ENCODE measurements at regions of chr10 and their contacts with region 1.

Region 1: GRCh38 chr10:70540089-70540788 is 61.7 kb downstream of the PALD1 start:
- DNase-seq: peak in 1 of 2 donors; percentile 14
- H3K4me3 ChIP-seq: no peak overlapping the region
- H3K27ac ChIP-seq: no peak overlapping the region
- H3K4me1 ChIP-seq: no peaks in the 10 kb centered on the region
- H3K27me3 ChIP-seq: no peaks in the 10 kb centered on the region
- CTCF ChIP-seq: peak in 5 of 6 experiments; percentile 25 to 53 (median 33)
- POLR2A ChIP-seq: no peak

Region 2: DNA sequence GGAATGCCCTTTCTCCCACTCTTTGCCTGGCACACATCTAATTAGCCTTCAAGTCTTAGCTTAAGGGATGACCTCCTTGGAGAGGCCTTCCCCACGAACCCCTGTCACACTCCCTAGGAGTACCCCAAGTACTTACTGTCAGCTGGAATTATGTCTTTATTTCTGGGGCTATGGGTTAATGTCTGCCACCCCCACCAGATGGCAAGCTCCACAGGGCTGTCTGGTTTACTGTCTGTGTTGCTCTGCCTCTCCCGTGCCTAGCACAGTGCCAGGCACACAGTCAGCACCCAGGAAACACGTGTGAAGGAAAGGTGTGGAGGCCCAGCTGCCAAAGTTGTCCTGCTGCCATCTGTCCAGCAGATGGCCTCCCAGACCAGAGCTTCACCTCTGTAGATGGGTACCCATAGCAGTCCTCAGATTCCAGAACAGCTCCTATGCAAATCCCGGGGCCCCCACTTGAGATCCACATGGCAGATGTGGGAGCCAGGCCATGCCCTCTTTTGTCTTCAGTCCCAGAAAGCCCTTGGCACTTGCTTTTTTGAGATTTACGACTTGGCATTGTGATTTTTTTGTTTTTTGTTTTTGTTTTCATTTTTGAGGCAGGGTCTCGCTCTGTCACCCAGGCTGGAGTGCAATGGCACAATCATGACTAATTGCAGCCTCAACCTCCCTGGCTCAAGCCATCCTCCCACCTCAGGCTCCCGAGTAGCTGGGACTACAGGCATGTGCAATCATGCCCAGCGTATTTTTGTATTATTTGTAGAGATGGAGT is 78.8 kb before region 1 on chr10:
- intact Hi-C with region 1: loop called (anchors 5 kb)
- DNase-seq: peak; percentile 53 to 56
- H3K4me3 ChIP-seq: no peak overlapping the region
- H3K27ac ChIP-seq: no peak overlapping the region
- H3K4me1 ChIP-seq: peaks cover 11 to 20% of the 10 kb centered on the region in 2 donors
- H3K27me3 ChIP-seq: no peaks in the 10 kb centered on the region
- CTCF ChIP-seq: peak; percentile 47 to 88 (median 78)
- POLR2A ChIP-seq: no peak

Region 3: DNA sequence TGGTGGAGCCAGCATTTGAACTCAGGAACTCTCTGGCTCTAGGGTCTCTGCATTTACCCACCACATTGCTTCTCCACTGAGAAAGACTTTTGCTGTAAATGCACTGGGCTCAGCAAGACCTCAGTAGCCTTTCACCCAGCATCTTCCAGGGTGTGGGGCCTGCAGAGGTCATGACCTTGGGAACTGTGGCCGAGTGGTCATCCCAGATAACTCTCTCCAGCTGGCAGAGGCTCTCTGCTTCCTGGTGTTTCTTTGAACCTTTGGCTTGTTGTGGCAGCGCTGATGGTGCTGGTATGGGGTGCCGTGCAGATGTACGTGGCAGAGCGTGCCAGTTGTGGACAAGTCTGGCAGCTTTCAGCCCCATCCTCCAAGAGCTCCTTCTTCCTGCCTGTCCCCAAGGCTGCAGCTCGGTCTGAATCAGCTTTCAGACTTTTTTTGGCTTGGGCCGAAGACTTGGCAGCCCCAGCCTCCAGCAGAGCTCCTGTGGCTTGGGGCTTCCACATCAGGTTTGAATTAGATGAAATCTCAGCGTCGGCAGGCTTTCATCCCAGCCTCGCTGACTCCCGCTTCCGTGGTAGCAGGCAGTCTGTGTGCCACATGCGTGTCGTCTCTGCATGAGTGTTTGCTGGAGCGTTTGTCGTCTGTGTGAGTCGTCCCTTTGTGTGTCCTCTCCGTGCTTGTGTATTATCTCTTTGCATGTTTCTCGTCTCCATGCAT is 153.5 kb after region 1 on chr10:
- intact Hi-C with region 1: no loop called
- DNase-seq: peak; percentile 7 to 8
- H3K4me3 ChIP-seq: no peak overlapping the region
- H3K27ac ChIP-seq: no peak overlapping the region
- H3K4me1 ChIP-seq: no peaks in the 10 kb centered on the region
- H3K27me3 ChIP-seq: no peaks in the 10 kb centered on the region
- CTCF ChIP-seq: no peak
- POLR2A ChIP-seq: no peak

Measured in thyroid gland (tissue), 4 donors.